IMR-90 (cell line): ENCODE measurements at regions of chr5 and their contacts with region 1.

Region 1: DNA sequence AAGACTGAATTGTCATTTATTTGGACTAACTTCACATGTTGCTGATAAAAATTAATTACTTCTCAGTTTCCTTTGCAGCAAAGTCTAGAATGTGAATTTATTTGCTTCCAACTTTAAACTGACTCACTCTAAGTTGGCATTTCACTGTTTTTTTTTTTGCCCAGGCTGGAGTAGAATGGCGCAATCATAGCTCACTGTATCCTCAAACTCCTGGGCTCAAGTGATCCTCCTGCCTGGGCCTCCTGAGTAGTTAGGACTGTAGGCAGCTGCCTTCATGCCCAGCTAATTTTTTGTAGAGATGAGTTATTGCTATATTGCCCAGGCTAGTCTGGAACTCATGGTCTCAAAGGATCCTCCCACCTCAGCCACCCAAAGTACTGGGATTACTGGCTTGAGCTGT is 3.6 kb downstream of the CCNB1 start:
- DNase-seq: no peak
- ATAC-seq: no peak
- H3K4me3 ChIP-seq: no peak overlapping the region
- H3K27ac ChIP-seq: no peak overlapping the region
- H3K4me1 ChIP-seq: peaks cover 2% of the 10 kb centered on the region; the same call in 1 of the 2 replicates
- H3K27me3 ChIP-seq: no peaks in the 10 kb centered on the region
- CTCF ChIP-seq: no peak
- POLR2A ChIP-seq: no peak
- RAD21 ChIP-seq: no peak

Region 2: DNA sequence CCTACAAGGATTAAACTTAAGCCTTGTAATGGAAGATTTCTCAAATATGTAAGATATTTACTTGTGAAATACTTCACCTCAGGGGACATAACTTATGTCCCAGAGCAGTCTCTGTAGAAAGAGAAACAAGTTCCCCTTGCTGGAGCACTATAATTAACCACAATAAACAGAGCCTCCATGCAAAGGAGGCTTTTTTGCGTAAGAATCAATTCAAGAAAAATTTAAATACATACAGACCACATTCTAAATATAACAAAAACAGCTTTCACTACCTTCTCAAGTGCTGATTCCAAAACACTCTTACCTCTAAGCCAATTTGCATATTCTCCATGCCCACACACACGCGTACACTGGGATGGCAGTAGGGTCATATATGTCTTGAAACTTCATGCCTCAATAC is 34.2 kb before region 1 on chr5:
- CTCF ChIA-PET with region 1: no interaction called
- POLR2A ChIA-PET with region 1: no interaction called
- dilution Hi-C with region 1: no loop called
- in situ Hi-C with region 1: no loop called
- intact Hi-C with region 1: no loop called
- DNase-seq: no peak
- ATAC-seq: peak; percentile 60
- H3K4me3 ChIP-seq: no peak overlapping the region
- H3K27ac ChIP-seq: no peak overlapping the region
- H3K4me1 ChIP-seq: no peaks in the 10 kb centered on the region
- H3K27me3 ChIP-seq: no peaks in the 10 kb centered on the region
- CTCF ChIP-seq: no peak
- POLR2A ChIP-seq: no peak
- RAD21 ChIP-seq: no peak

Region 3: GRCh38 chr5:69206528-69207190 is 36.2 kb after region 1 on chr5:
- CTCF ChIA-PET with region 1: no interaction called
- POLR2A ChIA-PET with region 1: no interaction called
- dilution Hi-C with region 1: no loop called
- in situ Hi-C with region 1: no loop called
- intact Hi-C with region 1: loop called (anchors 2 kb)
- DNase-seq: peak; percentile 54
- ATAC-seq: peak; percentile 40; the same call in 1 of the 2 replicates
- H3K4me3 ChIP-seq: no peak overlapping the region
- H3K27ac ChIP-seq: peak overlapping the region; percentile 56; the same call in 1 of the 2 replicates
- H3K4me1 ChIP-seq: no peaks in the 10 kb centered on the region; the same call in none of the 2 replicates
- H3K27me3 ChIP-seq: no peaks in the 10 kb centered on the region
- CTCF ChIP-seq: no peak
- POLR2A ChIP-seq: no peak
- RAD21 ChIP-seq: no peak